ENCODE measurements at regions of chr16 and their contacts with region 1.

Region 1: GRCh38 chr16:27529962-27530361 is 19.8 kb downstream of the GTF3C1 start:
- DNase-seq: no peak
- ATAC-seq: peak in 1 of 2 donors; percentile 1
- H3K4me3 ChIP-seq: no peak overlapping the region
- H3K27ac ChIP-seq: peak overlapping the region; percentile 96 to 98 (median 96)
- H3K4me1 ChIP-seq: peaks cover 60 to 64% of the 10 kb centered on the region in 2 donors
- H3K27me3 ChIP-seq: no peaks in the 10 kb centered on the region
- CTCF ChIP-seq: no peak
- POLR2A ChIP-seq: no peak

Region 2: GRCh38 chr16:25569011-25569410 is 1961.0 kb before region 1 on chr16:
- in situ Hi-C with region 1: no loop called
- intact Hi-C with region 1: no loop called
- DNase-seq: no peak
- ATAC-seq: no peak
- H3K4me3 ChIP-seq: no peak overlapping the region
- H3K27ac ChIP-seq: no peak overlapping the region
- H3K4me1 ChIP-seq: no peaks in the 10 kb centered on the region
- H3K27me3 ChIP-seq: no peaks in the 10 kb centered on the region
- CTCF ChIP-seq: no peak
- POLR2A ChIP-seq: no peak

Region 3: GRCh38 chr16:27483624-27484023 is 46.3 kb before region 1 on chr16:
- in situ Hi-C with region 1: no loop called
- intact Hi-C with region 1: loop called (anchors 1 kb)
- DNase-seq: peak in 1 of 2 donors; percentile 31
- ATAC-seq: peak in 1 of 2 donors; percentile 15
- H3K4me3 ChIP-seq: no peak overlapping the region
- H3K27ac ChIP-seq: peak overlapping the region; percentile 78 to 88 (median 82)
- H3K4me1 ChIP-seq: peaks cover 22 to 24% of the 10 kb centered on the region in 2 donors
- H3K27me3 ChIP-seq: no peaks in the 10 kb centered on the region
- CTCF ChIP-seq: no peak
- POLR2A ChIP-seq: no peak

Region 4: DNA sequence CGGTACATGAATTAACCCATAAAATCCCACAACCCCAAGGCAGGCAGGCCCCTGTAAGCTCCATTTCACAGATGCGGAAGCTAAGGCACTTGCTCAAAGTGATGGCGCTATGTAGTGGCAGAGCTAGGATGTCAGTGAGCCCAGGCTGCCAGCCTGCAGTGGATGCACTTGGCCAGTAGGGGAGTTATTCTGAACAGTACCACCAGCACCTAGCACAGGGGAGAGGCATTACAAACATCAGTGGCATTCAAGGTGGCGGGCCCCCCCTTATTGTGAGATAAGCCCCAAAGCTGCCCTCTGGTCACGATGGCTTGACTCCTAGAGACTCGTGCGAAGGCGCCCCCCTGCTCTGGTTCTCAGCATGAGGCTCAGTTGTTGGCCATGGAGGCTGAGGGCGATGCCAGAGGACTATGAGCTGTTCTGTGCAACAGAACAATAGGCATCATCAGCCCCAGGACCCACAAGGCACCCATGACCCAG is 14.0 kb before region 1 on chr16:
- in situ Hi-C with region 1: no loop called
- intact Hi-C with region 1: loop called (anchors 2 kb)
- DNase-seq: peak in 1 of 2 donors; percentile 49
- ATAC-seq: no peak
- H3K4me3 ChIP-seq: no peak overlapping the region
- H3K27ac ChIP-seq: peak overlapping the region; percentile 96 to 98 (median 98)
- H3K4me1 ChIP-seq: peaks cover 49 to 56% of the 10 kb centered on the region in 2 donors
- H3K27me3 ChIP-seq: no peaks in the 10 kb centered on the region
- CTCF ChIP-seq: peak; percentile 23 to 72 (median 51)
- POLR2A ChIP-seq: no peak

Region 5: GRCh38 chr16:27549859-27550581 is 20.1 kb after region 1 on chr16 and contains the starts of genes GTF3C1 and KATNIP:
- in situ Hi-C with region 1: no loop called
- intact Hi-C with region 1: loop called (anchors 1 kb)
- DNase-seq: peak; percentile 99 to 100
- ATAC-seq: peak; percentile 94 to 97
- H3K4me3 ChIP-seq: peak within 1 kb of the TSS; percentile 84 to 99 (median 98)
- H3K27ac ChIP-seq: peak within 1 kb of the TSS; percentile 83 to 91 (median 88)
- H3K4me1 ChIP-seq: peaks cover 35 to 36% of the 10 kb centered on the region in 2 donors
- H3K27me3 ChIP-seq: no peaks in the 10 kb centered on the region
- CTCF ChIP-seq: no peak
- POLR2A ChIP-seq: peak; percentile 82
- total RNA-seq, gene GTF3C1: 52.0 to 108 (median 67.8) TPM
- total RNA-seq, gene KATNIP: 6.3 to 12.1 (median 7.7) TPM

Region 6: DNA sequence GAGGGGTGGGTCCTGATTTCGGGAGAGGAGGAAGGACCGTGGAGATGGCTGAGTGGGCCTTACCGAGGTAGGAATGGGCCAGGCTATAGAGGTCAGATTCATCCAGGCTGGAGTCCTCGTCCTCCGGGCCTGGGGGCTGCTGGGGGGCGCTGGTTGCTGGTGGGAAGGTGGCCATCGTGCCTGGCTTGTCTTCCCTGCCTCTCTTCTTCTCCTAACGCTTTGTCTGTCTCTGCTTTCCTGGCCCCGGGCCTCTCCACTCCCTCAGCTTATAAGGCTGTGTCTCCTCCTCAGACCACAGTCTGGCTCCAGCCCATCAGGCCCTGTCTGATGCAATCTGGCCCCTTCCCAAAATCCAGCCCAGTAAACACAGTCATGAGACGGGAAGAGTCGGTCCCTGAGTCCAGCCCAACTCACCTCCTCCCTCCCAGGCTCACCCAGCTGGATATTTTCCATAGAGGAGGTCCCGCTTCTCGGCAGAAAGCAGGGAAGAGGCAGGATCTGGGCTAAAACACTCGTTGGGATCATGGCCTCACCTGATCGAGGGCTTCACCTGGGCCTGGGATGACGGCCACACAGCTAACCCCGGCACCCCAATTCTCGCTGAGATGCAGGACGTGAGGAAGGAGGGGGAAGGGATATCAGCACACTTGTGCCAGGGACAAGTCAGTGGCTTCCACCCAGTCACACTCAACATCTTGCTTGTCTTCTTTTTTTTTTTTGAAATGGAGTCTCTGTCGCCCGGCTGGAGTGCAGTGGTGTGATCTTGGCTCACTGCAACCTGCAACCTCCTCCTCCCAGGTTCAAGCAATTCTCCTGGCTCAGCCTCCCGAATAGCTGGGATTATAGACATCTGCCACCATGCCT is 1009.0 kb after region 1 on chr16 and contains the start of gene NUPR1:
- in situ Hi-C with region 1: no loop called
- intact Hi-C with region 1: loop called (anchors 10 kb)
- DNase-seq: peak; percentile 98 to 99
- ATAC-seq: peak; percentile 84 to 85
- H3K4me3 ChIP-seq: peak within 1 kb of the TSS; percentile 66 to 79 (median 68)
- H3K27ac ChIP-seq: peak within 1 kb of the TSS; percentile 98 to 99 (median 99)
- H3K4me1 ChIP-seq: peaks cover 22 to 35% of the 10 kb centered on the region in 2 donors
- H3K27me3 ChIP-seq: no peaks in the 10 kb centered on the region
- CTCF ChIP-seq: no peak
- POLR2A ChIP-seq: peak; percentile 91 to 96
- total RNA-seq, gene NUPR1: 18.7 to 44.3 (median 22.6) TPM